ENCODE measurements at regions of chr6 and their contacts with region 1.

Region 1: DNA sequence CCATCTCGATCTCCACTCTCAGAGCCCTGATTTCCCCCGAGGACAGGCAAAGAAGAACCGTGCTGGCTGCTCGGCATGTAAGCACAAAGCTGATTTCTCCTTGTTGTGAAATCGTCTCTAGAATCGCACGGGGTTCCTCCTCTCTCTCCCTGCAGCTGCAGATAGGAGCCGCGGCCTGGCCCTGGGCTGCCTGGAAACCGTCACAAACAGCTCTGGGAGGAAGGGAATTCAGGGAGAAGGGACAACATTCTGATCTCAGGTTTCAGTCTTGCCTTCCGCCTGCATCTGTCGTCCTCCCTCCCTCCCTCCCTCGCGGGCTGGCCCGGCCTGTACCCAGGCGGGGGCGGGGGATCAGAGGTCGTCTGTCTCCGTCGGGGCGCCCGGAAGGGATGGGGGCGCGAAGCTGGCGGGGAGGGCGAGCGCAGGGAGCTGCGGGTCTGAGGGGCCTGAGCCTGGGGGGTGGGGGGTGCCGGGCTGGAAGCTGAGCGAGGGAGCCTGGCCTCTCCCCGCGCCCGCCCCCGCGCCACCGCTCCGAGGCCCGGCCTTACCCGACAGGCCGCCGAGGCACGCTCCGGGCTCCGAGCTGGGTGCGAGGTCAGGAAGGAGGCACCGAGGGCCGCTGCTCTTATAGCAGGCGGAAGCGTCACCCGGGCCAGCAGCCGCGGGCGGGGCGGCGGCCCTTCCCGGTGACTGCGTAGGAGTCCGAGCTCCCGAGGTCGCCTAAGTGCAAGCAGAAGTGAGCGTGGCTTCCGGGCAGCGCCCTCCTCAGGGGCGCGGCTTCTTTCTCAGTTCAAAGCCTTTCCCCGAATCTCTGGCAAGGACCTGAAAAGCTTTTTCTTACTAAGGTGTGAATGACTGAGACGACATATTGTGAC is at the start of gene SERPINB1:
- DNase-seq: peak; percentile 44 to 89 (median 73)

Region 2: GRCh38 chr6:2770171-2770570 is 71.3 kb before region 1 on chr6:
- intact Hi-C with region 1: loop called (anchors 2 kb)
- DNase-seq: peak in 11 of 42 donors; percentile 27 to 79 (median 49)

Measured in head of caudate nucleus (tissue), 42 donors.